ENCODE measurements at regions of chr17 and their contacts with region 1.

Region 1: DNA sequence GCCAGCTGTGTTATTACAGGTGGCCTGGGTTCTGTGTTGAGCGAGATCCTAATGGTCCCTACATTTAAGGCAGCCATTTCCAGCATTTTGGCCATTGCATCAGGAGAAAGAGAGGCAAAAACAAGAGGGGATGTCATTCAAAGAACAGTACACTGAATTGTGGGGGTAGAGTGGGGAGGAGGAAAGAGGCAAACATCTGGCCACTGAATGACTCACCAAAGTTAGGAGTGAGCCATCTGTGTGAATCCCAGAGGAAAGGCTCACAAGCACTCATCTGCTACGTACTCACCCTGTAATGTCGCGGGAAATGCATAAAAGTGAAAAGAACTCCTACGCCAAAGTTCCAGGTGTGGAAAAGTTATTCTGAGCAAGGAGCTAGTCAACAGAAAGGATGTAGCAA is 16.7 kb downstream of the KRABD2 start:
- DNase-seq: peak; percentile 78
- H3K4me3 Mint-ChIP-seq: no peak overlapping the region
- H3K27ac Mint-ChIP-seq: peak overlapping the region; percentile 17
- H3K4me1 Mint-ChIP-seq: peaks cover 10% of the 10 kb centered on the region
- H3K27me3 Mint-ChIP-seq: no peaks in the 10 kb centered on the region
- CTCF ChIP-seq: no peak

Region 2: DNA sequence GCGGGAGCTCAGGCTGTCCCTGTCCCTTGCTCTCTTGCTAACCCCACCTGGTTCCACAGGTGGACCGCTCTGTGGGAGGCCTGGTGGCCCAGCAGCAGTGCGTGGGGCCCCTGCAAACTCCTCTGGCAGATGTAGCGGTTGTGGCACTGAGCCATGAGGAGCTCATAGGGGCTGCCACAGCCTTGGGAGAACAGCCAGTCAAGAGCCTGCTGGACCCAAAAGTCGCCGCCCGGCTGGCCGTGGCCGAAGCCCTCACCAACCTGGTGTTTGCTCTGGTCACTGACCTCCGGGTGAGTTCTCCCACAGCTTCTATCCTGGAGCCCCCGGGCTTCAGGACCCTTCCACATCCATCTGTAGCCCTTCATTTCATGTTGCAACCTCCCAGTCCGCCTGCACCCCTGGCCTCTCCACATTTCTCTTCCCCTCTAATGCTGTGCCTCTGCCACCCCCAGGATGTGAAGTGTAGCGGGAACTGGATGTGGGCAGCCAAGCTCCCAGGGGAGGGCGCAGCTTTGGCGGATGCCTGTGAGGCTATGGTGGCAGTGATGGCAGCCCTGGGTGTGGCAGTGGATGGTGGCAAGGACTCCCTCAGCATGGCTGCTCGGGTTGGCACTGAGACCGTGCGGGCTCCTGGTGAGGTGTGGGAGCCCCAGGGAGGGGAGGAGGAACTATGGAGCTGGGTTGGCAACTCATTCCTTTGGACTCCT is 94.8 kb before region 1 on chr17:
- CTCF ChIA-PET with region 1: no interaction called
- POLR2A ChIA-PET with region 1: no interaction called
- intact Hi-C with region 1: no loop called
- DNase-seq: no peak
- H3K4me3 Mint-ChIP-seq: no peak overlapping the region
- H3K27ac Mint-ChIP-seq: no peak overlapping the region
- H3K4me1 Mint-ChIP-seq: no peaks in the 10 kb centered on the region
- H3K27me3 Mint-ChIP-seq: no peaks in the 10 kb centered on the region
- CTCF ChIP-seq: no peak

Region 3: DNA sequence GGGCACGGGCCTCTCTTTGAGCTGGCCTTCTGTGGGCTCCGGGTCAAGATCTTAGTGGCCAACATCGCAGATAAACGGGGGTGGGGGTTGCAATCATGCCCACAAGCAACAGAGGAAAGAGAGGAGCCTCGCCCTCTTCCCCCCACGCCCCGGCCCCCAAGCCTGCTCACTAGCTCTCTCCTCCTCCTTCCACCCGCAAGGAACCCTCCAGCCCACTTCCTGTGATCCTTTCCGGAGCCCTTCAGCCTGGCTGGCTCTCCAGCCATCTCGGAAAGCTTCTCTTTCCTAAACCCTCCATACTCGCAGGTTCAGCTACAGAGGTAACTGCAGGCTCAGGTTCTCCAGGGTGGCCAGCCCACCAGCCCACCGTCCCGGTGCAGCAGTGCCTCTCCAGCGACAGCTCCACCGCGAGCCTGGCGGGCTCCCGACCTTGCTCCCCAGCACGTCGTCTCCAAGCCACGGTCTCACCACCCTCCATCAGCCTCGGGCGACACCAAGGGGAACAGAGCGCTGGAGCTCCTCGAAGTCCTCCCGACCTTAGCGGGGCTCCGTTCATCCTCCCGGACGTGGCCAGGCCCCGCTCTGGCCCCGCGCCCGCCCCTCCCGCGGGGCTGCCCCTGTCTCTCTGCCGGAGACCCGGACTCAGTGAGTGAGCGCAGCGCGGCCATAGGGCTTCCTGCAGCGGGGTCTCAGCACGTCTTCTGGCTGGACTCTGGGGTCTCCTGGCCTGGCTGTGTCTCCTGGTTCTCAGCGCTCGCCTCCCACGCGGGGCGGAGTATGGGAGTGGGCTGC is 33.1 kb before region 1 on chr17:
- CTCF ChIA-PET with region 1: no interaction called
- POLR2A ChIA-PET with region 1: no interaction called
- intact Hi-C with region 1: no loop called
- DNase-seq: no peak
- H3K4me3 Mint-ChIP-seq: no peak overlapping the region
- H3K27ac Mint-ChIP-seq: no peak overlapping the region
- H3K4me1 Mint-ChIP-seq: no peaks in the 10 kb centered on the region
- H3K27me3 Mint-ChIP-seq: peaks cover 30% of the 10 kb centered on the region
- CTCF ChIP-seq: no peak

Region 4: DNA sequence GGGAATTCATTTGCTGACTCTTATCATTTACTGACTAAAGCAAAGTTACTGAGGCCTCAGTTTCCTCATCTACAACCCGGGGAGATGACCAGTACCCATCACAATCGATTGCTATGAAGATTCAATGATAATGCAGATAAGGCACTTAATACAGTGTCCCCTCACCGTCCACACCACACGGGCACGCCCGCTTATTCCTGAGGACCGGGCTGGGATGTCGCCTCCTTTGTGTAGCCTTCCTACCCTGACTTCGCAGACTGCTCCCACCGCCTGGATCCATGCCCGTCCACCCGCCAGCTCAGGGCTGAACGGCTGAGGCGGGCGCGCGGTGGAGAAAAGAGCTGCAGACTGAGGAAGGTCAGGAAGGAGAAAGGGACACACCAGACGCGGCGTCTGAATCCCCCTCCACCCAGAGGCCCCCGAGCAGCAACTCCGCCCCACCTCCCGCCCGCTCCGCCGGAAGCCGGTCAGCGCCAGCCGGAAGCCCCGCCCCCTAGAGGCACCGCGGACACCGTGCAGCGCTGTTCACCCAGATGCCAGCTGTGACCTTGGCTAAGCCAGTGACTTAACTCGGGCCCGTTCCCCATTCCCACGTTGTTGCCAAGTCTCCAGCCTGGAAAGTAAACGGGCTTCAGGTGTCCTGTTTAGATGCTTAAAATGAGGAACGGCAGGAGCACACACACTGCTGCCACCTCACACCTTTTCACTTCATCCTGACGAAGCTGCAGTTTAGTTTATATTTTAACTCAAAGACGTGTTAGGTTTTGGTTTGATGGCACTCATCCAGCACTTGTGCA is 16.7 kb after region 1 on chr17 and contains the start of gene KRABD2:
- CTCF ChIA-PET with region 1: interaction called, 6 read pairs
- POLR2A ChIA-PET with region 1: interaction called, 16 read pairs
- intact Hi-C with region 1: no loop called
- DNase-seq: peak; percentile 86
- H3K4me3 Mint-ChIP-seq: peak within 1 kb of the TSS; percentile 76
- H3K27ac Mint-ChIP-seq: peak within 1 kb of the TSS; percentile 64
- H3K4me1 Mint-ChIP-seq: peaks cover 26% of the 10 kb centered on the region
- H3K27me3 Mint-ChIP-seq: no peaks in the 10 kb centered on the region
- CTCF ChIP-seq: peak; percentile 40

Measured in MCF 10A (cell line).